ENCODE measurements at regions of chr19 and their contacts with region 1.

Region 1: DNA sequence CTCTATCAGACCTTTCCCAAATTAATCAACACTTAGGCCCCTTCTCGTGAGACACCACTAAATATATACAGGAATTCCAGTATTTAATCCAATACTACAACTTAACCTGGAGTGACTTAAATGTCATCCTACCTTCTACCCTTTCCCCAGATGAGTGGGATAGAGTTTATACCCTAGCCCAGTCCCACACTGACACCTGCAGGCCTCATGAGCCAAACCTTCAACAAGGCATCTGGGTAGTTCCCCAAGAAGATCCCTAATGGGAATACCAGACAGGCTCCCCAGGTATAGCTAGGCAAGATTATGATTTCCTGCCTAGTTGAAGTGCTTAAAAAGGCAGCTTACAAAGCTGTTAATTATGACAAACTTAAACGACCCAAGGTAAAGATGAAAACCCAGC is 15.9 kb downstream of the ZNF83 start:
- DNase-seq: no peak
- CTCF ChIP-seq: no peak

Region 2: DNA sequence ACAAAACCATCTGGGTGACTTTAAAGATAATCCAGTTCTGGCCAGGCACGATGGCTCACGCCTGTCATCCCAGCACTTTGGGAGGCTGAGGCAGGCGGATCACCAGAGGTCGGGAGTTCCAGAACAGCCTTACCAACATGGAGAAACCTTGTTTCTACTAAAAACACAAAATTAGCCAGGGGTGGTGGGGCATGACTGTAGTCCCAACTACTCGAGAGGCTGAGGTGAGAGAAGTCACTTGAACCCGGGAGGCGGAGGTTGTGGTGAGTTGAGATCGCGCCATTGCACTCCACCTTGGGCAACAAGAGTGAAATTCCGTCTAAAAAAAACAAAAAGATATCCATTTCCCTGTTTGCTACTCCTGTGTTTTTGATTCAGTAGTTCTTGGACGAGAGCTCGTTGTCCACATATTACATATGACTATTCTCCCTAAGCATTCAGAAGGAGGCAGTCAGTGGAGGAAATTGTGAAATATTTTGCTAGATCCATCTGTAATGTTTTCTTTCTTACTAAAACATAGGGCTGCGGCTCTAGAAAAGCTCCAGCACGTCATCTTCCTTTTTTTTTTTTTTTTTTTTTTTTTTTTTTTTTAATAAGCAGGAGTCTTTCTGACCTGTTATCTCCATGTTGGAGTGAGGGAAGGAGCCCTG is 18.6 kb before region 1 on chr19:
- CTCF ChIA-PET with region 1: interaction called, 10 read pairs
- POLR2A ChIA-PET with region 1: no interaction called
- DNase-seq: no peak
- CTCF ChIP-seq: no peak

Region 3: GRCh38 chr19:52665529-52665928 is 43.3 kb after region 1 on chr19:
- CTCF ChIA-PET with region 1: no interaction called
- POLR2A ChIA-PET with region 1: no interaction called
- DNase-seq: no peak
- CTCF ChIP-seq: no peak

Measured in GM10248 (cell line).